Esophagus muscularis mucosa (tissue), 4 donors: ENCODE measurements at regions of chr2 and their contacts with region 1.

Region 1: DNA sequence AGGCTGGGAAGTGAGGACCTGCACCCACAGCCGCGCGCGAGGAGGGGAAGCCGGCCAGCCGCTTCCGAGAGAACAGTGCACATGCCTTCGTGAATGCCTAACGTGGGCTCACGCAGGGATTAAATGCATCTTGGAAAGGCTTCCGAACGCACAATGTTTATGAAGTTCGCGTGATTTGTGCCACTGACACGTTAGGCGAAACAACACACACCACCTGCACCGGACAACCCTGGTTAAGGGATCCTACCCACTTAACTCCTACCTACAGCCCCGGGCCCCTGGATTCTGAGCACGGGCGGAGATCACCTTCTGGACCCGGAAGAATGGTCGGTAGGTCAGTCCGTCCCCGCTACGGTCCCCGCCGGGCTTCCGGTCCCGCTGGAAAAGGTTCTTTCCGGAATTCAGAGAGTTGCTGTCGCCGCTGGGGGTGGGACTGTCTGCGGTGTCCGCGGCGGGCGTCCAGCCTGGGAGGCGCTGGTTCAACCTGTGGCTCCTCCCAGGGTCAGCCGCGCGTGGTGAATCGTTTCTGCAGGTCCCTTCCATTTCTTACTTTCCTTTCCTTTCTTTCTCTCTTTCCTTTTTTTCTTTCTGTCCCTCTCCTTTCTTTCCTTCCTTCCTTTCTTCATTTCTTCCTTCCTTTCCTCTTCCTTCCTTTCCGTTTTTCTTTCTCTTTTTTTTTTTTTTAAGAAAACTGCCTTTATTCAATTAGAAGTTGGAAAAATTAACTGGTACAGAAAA is at the start of gene MTIF2:
- DNase-seq: peak; percentile 97
- H3K4me3 ChIP-seq: peak within 1 kb of the TSS; percentile 71 to 83 (median 72)
- H3K27ac ChIP-seq: peak within 1 kb of the TSS; percentile 83 to 90 (median 88)
- H3K4me1 ChIP-seq: peaks cover 13 to 20% (median 18%) of the 10 kb centered on the region in 4 donors
- H3K27me3 ChIP-seq: no peaks in the 10 kb centered on the region
- CTCF ChIP-seq: peak in 2 of 3 experiments; percentile 2 to 26
- EP300 ChIP-seq: no peak
- POLR2A ChIP-seq: no peak
- total RNA-seq, gene MTIF2: 16.1 to 22.6 (median 21.0) TPM

Region 2: DNA sequence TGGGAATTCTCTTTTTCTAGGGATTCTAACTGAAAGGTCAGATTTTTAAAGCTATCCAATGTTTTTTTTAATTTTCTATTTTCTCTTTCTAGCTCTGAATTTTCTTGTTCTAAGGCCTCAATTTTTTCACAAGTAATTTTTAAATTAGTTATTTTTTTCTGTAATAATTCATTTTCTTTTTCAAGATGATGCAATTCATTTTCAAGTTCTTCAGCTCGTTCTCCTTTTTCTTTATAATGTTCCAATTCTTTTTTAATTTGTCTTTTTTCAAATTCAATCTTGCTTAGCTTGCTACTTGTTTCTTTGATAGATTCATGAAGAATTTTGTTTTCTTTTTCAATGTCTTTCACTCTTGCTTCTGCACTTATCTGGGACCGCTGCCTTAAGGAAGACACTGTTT is 65.7 kb after region 1 on chr2:
- intact Hi-C with region 1: loop called (anchors 2 kb)
- DNase-seq: no peak
- H3K4me3 ChIP-seq: no peak overlapping the region
- H3K27ac ChIP-seq: no peak overlapping the region
- H3K4me1 ChIP-seq: no peaks in the 10 kb centered on the region
- H3K27me3 ChIP-seq: no peaks in the 10 kb centered on the region
- CTCF ChIP-seq: no peak
- EP300 ChIP-seq: no peak
- POLR2A ChIP-seq: no peak

Region 3: GRCh38 chr2:55519938-55520885 is 251.1 kb after region 1 on chr2:
- intact Hi-C with region 1: loop called (anchors 10 kb)
- DNase-seq: peak; percentile 92
- H3K4me3 ChIP-seq: peak overlapping the region; percentile 79 to 91 (median 85)
- H3K27ac ChIP-seq: peak overlapping the region; percentile 83 to 92 (median 88)
- H3K4me1 ChIP-seq: peaks cover 6 to 23% (median 16%) of the 10 kb centered on the region in 4 donors
- H3K27me3 ChIP-seq: no peaks in the 10 kb centered on the region
- CTCF ChIP-seq: no peak
- EP300 ChIP-seq: no peak
- POLR2A ChIP-seq: no peak